ENCODE measurements at regions of chr22 and their contacts with region 1.

Region 1: DNA sequence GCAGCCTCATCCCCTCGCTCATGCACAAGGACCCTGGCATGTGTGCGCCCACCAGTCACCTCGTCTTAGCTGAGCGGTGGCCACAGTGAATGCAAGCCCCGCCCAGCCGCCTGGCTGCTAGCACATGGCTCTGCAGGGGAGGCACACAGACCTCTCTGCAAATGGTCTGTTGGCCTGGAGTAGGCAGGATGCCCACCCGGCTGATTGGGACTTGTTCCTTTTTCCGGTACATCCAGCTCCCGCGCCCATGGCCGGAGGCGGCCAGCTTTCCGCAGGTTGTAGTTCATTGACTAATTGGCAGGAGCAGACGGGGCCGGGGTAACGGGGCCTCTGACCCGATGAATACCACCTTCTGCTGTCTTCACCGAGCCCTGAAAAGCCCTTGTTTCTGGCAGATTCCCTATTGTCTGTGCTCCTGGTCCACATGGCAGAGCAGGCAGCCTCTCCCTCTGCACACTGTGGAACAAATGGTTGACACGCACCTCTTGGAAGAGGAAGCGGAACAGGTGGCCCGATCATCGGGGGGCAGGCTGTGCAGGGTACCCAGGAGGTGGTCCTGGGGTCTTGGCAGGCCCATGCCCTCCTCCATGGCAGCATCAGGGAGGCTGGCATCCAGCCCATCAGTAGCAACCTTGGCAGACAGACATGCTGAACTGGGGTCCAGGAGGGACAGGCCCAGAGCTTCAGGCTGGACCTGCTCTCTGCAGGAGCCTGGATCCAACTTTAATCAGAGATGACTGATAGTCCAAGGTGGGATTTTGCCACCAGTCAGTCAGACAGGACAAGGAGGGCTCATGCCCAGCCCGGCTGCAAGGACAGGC is 1512.0 kb downstream of the BRD1 start:
- DNase-seq: no peak
- H3K4me3 ChIP-seq: no peak overlapping the region
- H3K27ac ChIP-seq: no peak overlapping the region
- H3K4me1 ChIP-seq: no peaks in the 10 kb centered on the region
- H3K27me3 ChIP-seq: no peaks in the 10 kb centered on the region
- CTCF ChIP-seq: no peak
- POLR2A ChIP-seq: no peak

Region 2: DNA sequence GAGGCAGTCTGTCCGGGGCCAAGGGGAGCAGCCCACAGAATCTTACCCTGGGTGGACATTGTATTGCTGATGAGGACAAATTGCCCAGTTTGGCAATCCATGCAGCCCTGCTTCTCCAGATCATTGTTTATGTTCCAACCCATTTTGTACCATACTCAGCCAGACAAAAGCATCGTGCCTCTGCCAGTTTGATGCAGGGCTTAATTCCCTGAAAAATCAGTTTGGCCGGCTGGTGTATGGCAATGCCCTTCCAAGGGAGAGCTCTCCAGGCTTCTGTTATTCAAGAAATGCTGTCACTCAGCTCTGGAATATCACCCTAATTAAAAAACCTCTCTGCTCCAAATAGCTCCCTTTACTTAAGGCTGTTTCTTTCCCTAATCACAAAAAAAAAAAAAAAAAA is 855.5 kb before region 1 on chr22:
- CTCF ChIA-PET with region 1: no interaction called
- POLR2A ChIA-PET with region 1: interaction called, 10 read pairs
- dilution Hi-C with region 1: no loop called
- intact Hi-C with region 1: no loop called
- DNase-seq: no peak
- H3K4me3 ChIP-seq: no peak overlapping the region
- H3K27ac ChIP-seq: no peak overlapping the region
- H3K4me1 ChIP-seq: no peaks in the 10 kb centered on the region
- H3K27me3 ChIP-seq: no peaks in the 10 kb centered on the region
- CTCF ChIP-seq: no peak
- POLR2A ChIP-seq: no peak

Region 3: GRCh38 chr22:48369789-48370507 is 54.3 kb after region 1 on chr22:
- CTCF ChIA-PET with region 1: no interaction called
- POLR2A ChIA-PET with region 1: no interaction called
- dilution Hi-C with region 1: no loop called
- intact Hi-C with region 1: no loop called
- DNase-seq: no peak
- H3K4me3 ChIP-seq: no peak overlapping the region
- H3K27ac ChIP-seq: no peak overlapping the region
- H3K4me1 ChIP-seq: no peaks in the 10 kb centered on the region
- H3K27me3 ChIP-seq: no peaks in the 10 kb centered on the region
- CTCF ChIP-seq: no peak
- POLR2A ChIP-seq: no peak

Measured in endothelial cell of umbilical vein (primary cell).